ENCODE measurements at regions of chr12 and their contacts with region 1.

Region 1: GRCh38 chr12:102182635-102183034 is 15.0 kb downstream of the PMCH start:
- DNase-seq: no peak
- H3K4me3 ChIP-seq: no peak overlapping the region
- CTCF ChIP-seq: no peak

Region 2: DNA sequence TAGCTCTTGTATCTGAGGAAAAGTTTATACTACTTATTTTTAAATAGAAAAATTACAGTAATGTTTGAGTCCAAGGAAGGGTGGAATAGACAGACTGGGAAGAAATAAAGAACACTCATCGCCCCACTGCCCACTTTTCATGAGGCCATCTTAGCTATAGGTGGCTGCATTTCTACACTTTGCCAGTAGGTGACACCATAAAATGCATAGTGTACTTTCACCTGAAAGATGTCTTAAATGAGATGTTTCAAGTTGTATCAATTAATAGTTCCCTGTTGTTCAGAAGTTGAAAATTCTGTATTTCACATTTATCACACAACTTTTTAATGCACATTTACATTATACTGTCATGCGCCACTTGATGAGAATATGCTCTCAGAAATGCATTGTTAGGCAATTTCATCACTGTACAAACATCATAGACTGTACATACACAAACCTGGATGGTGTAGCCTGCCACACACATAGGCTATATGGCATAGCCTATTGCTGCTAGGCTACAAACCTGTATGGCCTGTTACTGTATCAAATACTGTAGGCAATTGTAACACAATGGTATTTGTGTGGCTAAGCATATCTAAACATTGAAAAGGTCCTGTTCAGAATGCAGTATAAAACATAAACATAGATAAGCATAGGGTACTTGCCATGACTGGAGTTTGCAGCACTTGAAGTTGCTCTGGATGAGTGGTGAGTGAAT is 12.6 kb before region 1 on chr12:
- CTCF ChIA-PET with region 1: interaction called, 16 read pairs
- POLR2A ChIA-PET with region 1: no interaction called
- DNase-seq: no peak
- H3K4me3 ChIP-seq: no peak overlapping the region
- CTCF ChIP-seq: peak; percentile 55

Region 3: DNA sequence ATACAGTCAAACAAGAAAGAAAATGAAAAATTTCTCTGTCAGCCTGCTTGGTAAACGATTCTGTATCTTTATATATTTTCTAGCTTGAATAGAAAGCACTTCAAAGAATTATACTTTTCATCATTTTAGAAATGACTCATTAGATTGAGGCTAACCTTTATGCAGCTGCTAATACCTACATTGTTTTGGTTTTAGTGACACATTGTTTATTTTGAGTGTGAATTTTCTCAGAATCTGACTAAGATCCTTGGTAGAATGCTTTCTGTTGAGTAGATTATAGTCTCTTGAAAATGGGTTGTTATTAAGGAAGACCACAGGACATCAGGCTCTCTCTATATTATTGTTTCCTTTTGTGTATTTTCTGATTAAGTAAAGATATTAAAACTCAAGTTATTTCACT is 15.2 kb after region 1 on chr12 and contains the start of gene PMCH:
- CTCF ChIA-PET with region 1: no interaction called
- POLR2A ChIA-PET with region 1: no interaction called
- DNase-seq: no peak
- H3K4me3 ChIP-seq: no peak within 1 kb of the TSS
- CTCF ChIP-seq: no peak

Measured in AG04449 (cell line).